ENCODE measurements at regions of chr2 and their contacts with region 1.

Region 1: DNA sequence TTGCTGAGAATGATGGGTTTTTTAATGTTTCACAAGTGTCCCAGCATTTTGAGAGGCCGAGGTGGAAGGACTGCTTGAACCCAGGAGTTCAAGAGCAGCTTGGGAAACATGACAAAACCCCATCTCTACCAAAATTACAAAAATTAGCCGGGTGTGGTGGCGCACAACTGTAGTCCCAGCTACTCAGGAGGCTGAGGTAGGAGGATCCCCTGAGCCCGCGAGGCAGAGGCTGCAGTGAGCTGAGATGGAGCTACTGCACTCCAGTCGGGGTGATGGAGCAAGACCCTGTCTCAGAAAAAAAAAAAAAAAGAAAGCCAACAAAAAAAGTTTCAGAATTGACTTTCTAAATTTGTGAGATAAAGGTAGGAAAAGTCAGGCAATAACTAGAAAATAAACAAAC is 8.7 kb downstream of the TFCP2L1 start:
- DNase-seq: no peak
- ATAC-seq: no peak
- H3K4me3 ChIP-seq: no peak overlapping the region
- H3K27ac ChIP-seq: no peak overlapping the region
- H3K4me1 ChIP-seq: no peaks in the 10 kb centered on the region
- H3K27me3 ChIP-seq: peaks cover 28% of the 10 kb centered on the region
- CTCF ChIP-seq: no peak
- POLR2A ChIP-seq: no peak
- RAD21 ChIP-seq: no peak

Region 2: DNA sequence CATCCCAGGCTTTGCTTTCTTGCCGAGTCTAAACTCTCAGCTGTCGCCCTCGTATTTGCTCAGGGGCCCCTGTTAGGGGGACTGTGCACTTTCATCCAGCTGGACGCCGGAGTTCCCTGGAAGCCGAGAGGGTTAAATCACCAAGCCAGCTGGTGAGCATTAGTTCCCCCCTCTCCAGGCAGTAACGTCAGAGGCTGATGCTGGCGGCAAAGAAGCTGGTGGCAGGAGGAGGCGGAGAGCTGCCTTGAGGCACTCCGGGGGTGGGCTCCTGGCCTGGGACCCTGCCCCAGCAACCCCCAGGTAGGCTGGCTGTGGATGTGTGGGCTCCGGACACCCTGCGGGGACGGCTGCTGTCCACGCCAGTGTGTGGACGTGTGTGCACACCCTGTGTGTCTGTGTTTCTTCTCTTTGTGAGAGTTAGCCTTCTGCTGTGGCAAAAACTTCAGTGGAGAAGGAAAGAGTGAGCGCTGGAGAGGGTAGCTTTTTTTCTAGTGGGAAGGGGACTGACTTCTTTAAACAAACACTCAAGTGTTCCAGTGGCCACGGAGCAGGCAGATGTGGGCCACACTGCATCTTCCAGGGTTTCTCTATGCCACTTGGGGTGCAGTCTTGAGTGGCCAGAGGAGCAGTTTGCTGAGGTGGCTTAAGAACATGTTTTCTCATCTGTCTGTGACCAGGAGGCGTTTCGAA is 455.9 kb before region 1 on chr2:
- CTCF ChIA-PET with region 1: no interaction called
- POLR2A ChIA-PET with region 1: interaction called, 14 read pairs
- dilution Hi-C with region 1: no loop called
- in situ Hi-C with region 1: no loop called
- intact Hi-C with region 1: no loop called
- DNase-seq: peak; percentile 90
- ATAC-seq: peak; percentile 65
- H3K4me3 ChIP-seq: peak overlapping the region; percentile 27
- H3K27ac ChIP-seq: peak overlapping the region; percentile 89
- H3K4me1 ChIP-seq: peaks cover 40% of the 10 kb centered on the region
- H3K27me3 ChIP-seq: no peaks in the 10 kb centered on the region
- CTCF ChIP-seq: no peak
- POLR2A ChIP-seq: peak; percentile 22; the same call in 1 of the 2 replicates
- RAD21 ChIP-seq: no peak

Region 3: DNA sequence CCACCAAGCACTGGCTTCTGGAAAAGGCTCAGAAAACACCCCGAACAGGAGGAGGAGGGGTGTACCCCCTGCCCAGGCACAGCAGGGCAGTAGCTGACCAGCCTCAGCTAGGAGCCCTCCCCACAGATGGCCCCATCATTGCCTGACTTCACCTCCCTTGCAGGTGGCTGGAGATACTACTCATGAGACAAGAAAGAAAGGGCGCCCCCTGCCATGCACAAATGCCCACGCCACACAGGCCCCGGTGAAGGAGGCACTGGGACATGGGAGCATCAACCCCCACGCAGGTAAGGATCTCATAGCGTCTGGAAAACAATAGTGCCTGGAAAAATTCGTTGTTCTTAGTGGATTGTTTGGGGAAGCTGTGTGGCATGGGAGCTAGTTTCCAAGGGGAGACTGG is 231.9 kb before region 1 on chr2:
- CTCF ChIA-PET with region 1: no interaction called
- POLR2A ChIA-PET with region 1: no interaction called
- dilution Hi-C with region 1: no loop called
- in situ Hi-C with region 1: no loop called
- intact Hi-C with region 1: no loop called
- DNase-seq: no peak
- ATAC-seq: no peak
- H3K4me3 ChIP-seq: no peak overlapping the region
- H3K27ac ChIP-seq: no peak overlapping the region
- H3K4me1 ChIP-seq: no peaks in the 10 kb centered on the region
- H3K27me3 ChIP-seq: peaks cover 76% of the 10 kb centered on the region
- CTCF ChIP-seq: no peak
- POLR2A ChIP-seq: no peak
- RAD21 ChIP-seq: no peak

Measured in IMR-90 (cell line).